ENCODE measurements at regions of chr10 and their contacts with region 1.

Region 1: DNA sequence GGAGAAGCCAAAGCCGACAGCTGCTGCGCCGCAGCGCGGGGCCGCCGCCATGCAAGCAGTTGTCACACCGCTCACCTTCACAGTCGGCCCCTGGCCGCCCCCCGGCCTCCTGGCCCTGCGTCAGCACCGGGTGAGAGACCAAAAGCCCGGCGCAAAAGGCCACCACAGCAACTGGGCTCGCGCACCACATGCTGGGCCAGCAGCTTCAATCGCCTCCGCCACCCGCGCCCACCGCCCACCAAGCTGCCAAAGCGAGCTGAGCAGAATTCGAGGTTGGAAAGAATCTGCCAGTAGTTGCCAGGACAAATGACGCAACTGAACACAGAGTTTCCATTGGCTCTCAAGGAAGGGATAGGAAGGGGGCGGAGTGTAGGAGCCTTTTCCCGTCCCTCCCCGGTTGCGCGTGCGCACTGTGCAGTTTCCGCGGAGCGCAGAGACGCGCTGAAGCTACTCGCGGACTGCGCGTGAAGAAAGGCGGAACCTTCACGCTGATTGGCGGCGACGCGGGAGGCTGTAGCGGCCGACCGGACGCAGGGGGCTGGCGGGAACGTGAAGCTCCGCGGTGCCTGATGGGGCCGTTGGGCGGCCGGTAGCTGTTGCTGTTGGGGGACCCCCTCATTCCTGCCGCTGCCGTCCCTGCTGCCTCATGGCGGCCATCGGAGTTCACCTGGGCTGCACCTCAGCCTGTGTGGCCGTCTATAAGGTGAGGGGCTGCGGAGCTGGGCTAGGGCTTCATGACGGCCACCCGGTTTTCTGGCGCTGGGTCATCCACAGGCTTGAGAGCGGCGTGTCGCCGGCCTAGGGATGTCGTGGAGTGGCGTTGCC is at the starts of genes CDNF, HSPA14 and MSANTD7:
- DNase-seq: peak; percentile 100
- H3K4me3 Mint-ChIP-seq: peak within 1 kb of the TSS; percentile 93
- H3K27ac Mint-ChIP-seq: peak within 1 kb of the TSS; percentile 94
- H3K4me1 Mint-ChIP-seq: peaks cover 20% of the 10 kb centered on the region
- H3K27me3 Mint-ChIP-seq: no peaks in the 10 kb centered on the region
- total RNA-seq, gene CDNF: 0.47 and 0.93 TPM in 2 replicates
- total RNA-seq, gene HSPA14: 36.6 and 38.0 TPM in 2 replicates
- total RNA-seq, gene MSANTD7: 26.7 and 29.6 TPM in 2 replicates

Region 2: DNA sequence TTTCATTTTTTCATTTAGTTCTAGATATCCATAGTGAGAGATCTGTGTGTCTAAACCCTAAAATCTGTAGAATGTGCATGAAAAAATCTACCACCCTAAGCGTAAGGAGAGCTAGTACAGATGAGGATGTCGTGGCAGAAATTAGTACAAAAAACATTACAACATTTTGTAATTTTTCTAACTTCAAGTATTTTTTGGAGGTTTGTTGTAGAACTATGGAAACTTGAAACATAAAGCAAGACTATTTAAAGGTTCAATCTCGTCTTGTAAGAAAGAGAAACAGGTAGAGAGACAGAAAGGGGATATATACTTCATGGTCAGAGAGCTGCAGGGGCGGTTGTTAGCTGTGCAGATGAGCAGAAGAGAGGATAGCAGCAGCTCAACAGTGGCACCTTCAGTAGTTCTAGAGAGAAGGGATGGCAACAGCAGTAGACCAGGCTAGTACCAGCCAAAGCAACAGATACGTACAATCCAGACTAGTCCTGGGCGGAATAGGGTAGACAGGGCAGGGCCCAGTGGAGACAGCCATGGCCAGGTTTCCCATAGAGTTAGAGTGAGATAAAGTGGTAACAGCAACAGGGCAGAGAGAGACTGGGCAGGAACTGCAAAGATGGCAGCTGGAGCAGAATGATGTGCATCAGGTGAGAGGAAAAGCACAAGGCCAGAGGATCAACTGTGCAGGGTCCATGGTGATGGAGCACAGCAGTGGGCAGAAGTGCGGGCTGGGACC is 652.5 kb before region 1 on chr10:
- intact Hi-C with region 1: loop called (anchors 5 kb)
- DNase-seq: peak; percentile 52
- H3K4me3 Mint-ChIP-seq: peak overlapping the region; percentile 46
- H3K27ac Mint-ChIP-seq: peak overlapping the region; percentile 92
- H3K4me1 Mint-ChIP-seq: peaks cover 20% of the 10 kb centered on the region
- H3K27me3 Mint-ChIP-seq: peaks cover 48% of the 10 kb centered on the region

Region 3: GRCh38 chr10:14528450-14528849 is 309.5 kb before region 1 on chr10:
- intact Hi-C with region 1: loop called (anchors 1 kb)
- DNase-seq: no peak
- H3K4me3 Mint-ChIP-seq: peak overlapping the region; percentile 62
- H3K27ac Mint-ChIP-seq: peak overlapping the region; percentile 82
- H3K4me1 Mint-ChIP-seq: peaks cover 92% of the 10 kb centered on the region
- H3K27me3 Mint-ChIP-seq: no peaks in the 10 kb centered on the region

Region 4: DNA sequence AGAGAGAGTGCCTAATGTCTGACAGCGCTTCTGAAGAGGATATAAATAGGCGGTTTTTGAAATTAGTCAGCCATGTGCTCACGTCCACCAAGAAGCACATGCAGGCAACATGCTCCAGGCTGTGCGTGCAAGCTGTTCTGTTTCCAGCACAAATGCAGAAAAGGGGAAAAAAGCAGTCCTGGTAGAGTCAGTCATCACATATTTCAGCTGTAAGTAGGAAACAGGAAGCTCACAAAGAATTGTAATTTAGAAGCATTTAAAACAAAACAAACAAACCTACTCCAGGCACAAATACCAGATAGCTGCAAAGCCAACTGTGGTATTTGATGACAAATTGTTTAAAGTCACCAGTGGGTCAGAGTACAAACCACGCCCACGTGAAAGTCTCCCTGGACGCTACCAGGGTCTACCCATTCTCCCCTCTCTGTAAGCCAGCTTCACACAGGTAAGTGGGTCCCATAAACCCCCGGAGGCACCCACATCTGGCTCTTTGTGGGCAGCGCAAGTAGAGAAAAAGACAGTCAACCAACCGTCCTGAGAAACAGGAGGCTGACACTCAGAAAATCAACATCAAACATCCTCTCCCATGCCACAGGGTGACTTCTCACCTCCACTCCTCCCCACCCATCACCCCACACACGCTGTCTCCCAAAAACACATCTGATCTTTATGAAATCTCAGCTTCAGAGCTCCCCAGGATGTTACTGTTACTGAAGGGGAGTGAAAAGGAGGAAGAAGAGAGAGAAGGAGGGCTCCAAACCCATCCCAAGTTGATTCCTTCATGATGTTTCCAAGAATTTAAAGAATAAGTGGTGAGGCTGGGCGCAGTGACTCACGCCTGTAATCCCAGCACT is 249.7 kb before region 1 on chr10:
- intact Hi-C with region 1: loop called (anchors 1 kb)
- DNase-seq: peak; percentile 52
- H3K4me3 Mint-ChIP-seq: peak overlapping the region; percentile 74
- H3K27ac Mint-ChIP-seq: peak overlapping the region; percentile 97
- H3K4me1 Mint-ChIP-seq: peaks cover 94% of the 10 kb centered on the region
- H3K27me3 Mint-ChIP-seq: no peaks in the 10 kb centered on the region

Region 5: DNA sequence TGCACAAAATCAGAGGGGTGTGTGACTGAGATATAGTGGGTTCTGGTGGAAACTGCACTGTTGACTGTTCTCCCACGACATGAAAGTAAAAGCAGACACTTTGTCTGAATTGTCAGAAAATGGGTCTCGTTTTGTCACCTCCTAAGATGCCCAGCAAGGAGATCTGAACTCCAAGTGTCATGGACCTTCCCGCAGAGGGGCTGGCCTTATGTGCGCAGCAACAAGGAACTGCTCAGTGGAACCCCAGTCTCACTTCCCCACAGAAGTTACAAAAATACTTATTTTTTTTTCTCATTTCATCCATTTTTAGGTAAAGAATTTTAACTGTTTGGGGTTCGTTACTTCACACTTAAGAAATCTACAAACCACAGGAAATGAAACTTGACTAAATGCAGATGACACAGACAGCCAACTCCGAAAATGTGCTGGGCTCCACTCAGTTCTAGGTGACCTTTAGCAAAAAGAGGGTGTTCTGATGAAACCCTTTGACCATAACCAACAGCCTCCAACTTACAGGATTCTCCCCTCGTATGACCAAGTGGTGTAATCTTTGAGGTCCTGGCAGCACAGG is 178.3 kb before region 1 on chr10:
- intact Hi-C with region 1: loop called (anchors 1 kb)
- DNase-seq: peak; percentile 59
- H3K4me3 Mint-ChIP-seq: peak overlapping the region; percentile 46
- H3K27ac Mint-ChIP-seq: peak overlapping the region; percentile 92
- H3K4me1 Mint-ChIP-seq: peaks cover 81% of the 10 kb centered on the region
- H3K27me3 Mint-ChIP-seq: no peaks in the 10 kb centered on the region

Region 6: GRCh38 chr10:14878266-14879054 is 40.5 kb after region 1 on chr10 and contains the start of gene SUV39H2:
- intact Hi-C with region 1: loop called (anchors 1 kb)
- DNase-seq: peak; percentile 95
- H3K4me3 Mint-ChIP-seq: peak within 1 kb of the TSS; percentile 96
- H3K27ac Mint-ChIP-seq: peak within 1 kb of the TSS; percentile 94
- H3K4me1 Mint-ChIP-seq: peaks cover 50% of the 10 kb centered on the region
- H3K27me3 Mint-ChIP-seq: no peaks in the 10 kb centered on the region
- total RNA-seq, gene SUV39H2: 43.3 and 51.7 TPM in 2 replicates

Region 7: GRCh38 chr10:14889318-14889717 is 51.3 kb after region 1 on chr10:
- intact Hi-C with region 1: no loop called
- DNase-seq: no peak
- H3K4me3 Mint-ChIP-seq: no peak overlapping the region
- H3K27ac Mint-ChIP-seq: peak overlapping the region; percentile 46
- H3K4me1 Mint-ChIP-seq: peaks cover 22% of the 10 kb centered on the region
- H3K27me3 Mint-ChIP-seq: no peaks in the 10 kb centered on the region

Region 8: GRCh38 chr10:14959276-14960057 is 121.5 kb after region 1 on chr10 and contains the start of gene MEIG1:
- intact Hi-C with region 1: loop called (anchors 1 kb)
- DNase-seq: peak; percentile 91
- H3K4me3 Mint-ChIP-seq: peak within 1 kb of the TSS; percentile 97
- H3K27ac Mint-ChIP-seq: peak within 1 kb of the TSS; percentile 95
- H3K4me1 Mint-ChIP-seq: peaks cover 22% of the 10 kb centered on the region
- H3K27me3 Mint-ChIP-seq: no peaks in the 10 kb centered on the region
- total RNA-seq, gene MEIG1: 0.44 TPM in 1 of 2 replicates, not detected in the other

Measured in activated T-helper 1 cell treated with anti-CD3 and anti-CD28 coated beads, Interleukin-12 subunit alpha, Interleukin-12 subunit beta, Interleukin-2, Interleukin-4 antibody, amounts not matched to agents 30 ng/mL and 10 ng/mL and 1 ng/mL, durations not matched to agents 14 hours and 24 hours and 36 hours (primary cell).